Naive thymus-derived CD4-positive, alpha-beta T cell (primary cell): ENCODE measurements at regions of chr2 and their contacts with region 1.

Region 1: GRCh38 chr2:96638144-96639121 is at the start of gene KANSL3:
- DNase-seq: peak; percentile 81 to 96 (median 88)
- ATAC-seq: peak; percentile 93
- H3K4me3 ChIP-seq: peak within 1 kb of the TSS; percentile 97
- H3K4me3 Mint-ChIP-seq: peak within 1 kb of the TSS; percentile 89 to 96 (median 93)
- H3K27ac ChIP-seq: peak within 1 kb of the TSS; percentile 90
- H3K27ac Mint-ChIP-seq: peak within 1 kb of the TSS; percentile 87 to 95 (median 92)
- H3K4me1 ChIP-seq: peaks cover 18% of the 10 kb centered on the region in 2 donors
- H3K4me1 Mint-ChIP-seq: peaks cover 28 to 46% (median 39%) of the 10 kb centered on the region in 7 donors
- H3K27me3 ChIP-seq: no peaks in the 10 kb centered on the region
- H3K27me3 Mint-ChIP-seq: peaks cover 0 to 10% (median 0%) of the 10 kb centered on the region in 5 donors
- total RNA-seq, gene KANSL3: 54.0 to 65.0 (median 55.9) TPM

Region 2: GRCh38 chr2:96145036-96145847 is 493.2 kb before region 1 on chr2 and contains the start of gene DUSP2:
- CTCF ChIA-PET with region 1: no interaction called
- POLR2A ChIA-PET with region 1: no interaction called
- intact Hi-C with region 1: loop called in 1 of 2 experiments (anchors 5 kb)
- DNase-seq: peak; percentile 79 to 97 (median 83)
- ATAC-seq: peak; percentile 61
- H3K4me3 ChIP-seq: peak within 1 kb of the TSS; percentile 69
- H3K4me3 Mint-ChIP-seq: peak within 1 kb of the TSS; percentile 90 to 98 (median 95)
- H3K27ac ChIP-seq: peak within 1 kb of the TSS; percentile 99
- H3K27ac Mint-ChIP-seq: peak within 1 kb of the TSS; percentile 96 to 100 (median 99)
- H3K4me1 ChIP-seq: peaks cover 50 to 52% of the 10 kb centered on the region in 2 donors
- H3K4me1 Mint-ChIP-seq: peaks cover 35 to 69% (median 62%) of the 10 kb centered on the region in 7 donors
- H3K27me3 ChIP-seq: no peaks in the 10 kb centered on the region
- H3K27me3 Mint-ChIP-seq: no peaks in the 10 kb centered on the region
- total RNA-seq, gene DUSP2: 22.1 to 255 (median 50.3) TPM

Region 3: DNA sequence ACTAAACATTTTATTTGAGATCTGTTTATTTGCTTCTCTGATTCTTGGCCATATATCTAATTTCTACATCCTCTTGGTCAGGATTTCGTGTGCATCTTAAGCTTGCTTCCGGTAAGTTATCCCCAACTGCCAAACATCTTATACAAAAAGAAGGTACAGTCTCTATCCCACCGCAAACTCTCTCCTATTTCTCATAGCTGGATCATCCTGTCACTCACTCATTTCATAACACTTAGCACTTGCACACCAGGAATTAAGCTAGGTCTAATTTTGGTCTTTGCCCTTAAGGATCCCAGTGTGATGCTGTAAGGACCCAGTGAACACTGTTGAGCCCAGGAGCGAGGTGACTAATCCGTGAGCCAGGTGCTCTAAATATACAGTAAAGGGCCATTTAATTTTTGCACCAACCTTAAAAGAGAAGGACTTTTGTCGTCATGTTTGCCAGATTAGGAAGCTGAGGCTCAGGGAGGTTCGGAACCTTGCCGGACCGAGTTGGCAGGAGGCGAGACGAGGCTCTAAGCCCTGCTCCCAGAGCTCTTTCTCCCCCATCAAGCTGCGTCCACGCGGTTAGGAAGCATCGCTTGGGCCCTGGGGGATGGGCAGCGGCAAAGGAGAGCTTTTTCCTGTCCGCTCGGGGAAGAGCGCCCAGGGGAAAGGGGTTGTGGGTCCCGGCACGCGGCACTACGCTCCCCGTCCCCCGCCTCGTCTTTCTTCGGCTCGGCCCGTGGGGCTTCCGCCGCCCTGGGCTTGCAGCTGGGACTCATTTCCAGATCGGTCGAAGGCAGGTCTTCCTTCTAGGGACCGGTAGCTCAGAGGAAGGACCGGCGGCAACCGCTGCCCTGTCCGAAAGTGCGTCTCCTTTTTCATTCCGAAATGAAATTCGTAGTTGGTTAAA is 317.5 kb before region 1 on chr2:
- CTCF ChIA-PET with region 1: no interaction called
- POLR2A ChIA-PET with region 1: no interaction called
- intact Hi-C with region 1: loop called in 1 of 2 experiments (anchors 5 kb)
- DNase-seq: peak in 3 of 9 donors; percentile 13 to 62 (median 19)
- ATAC-seq: peak; percentile 28
- H3K4me3 ChIP-seq: peak overlapping the region; percentile 82
- H3K4me3 Mint-ChIP-seq: peak overlapping the region; percentile 86 to 95 (median 91)
- H3K27ac ChIP-seq: peak overlapping the region; percentile 53
- H3K27ac Mint-ChIP-seq: peak overlapping the region in 7 of 9 donors; percentile 6 to 89 (median 62)
- H3K4me1 ChIP-seq: peaks cover 21 to 42% of the 10 kb centered on the region in 2 donors
- H3K4me1 Mint-ChIP-seq: peaks cover 7 to 67% (median 33%) of the 10 kb centered on the region in 7 donors
- H3K27me3 ChIP-seq: no peaks in the 10 kb centered on the region
- H3K27me3 Mint-ChIP-seq: peaks cover 0 to 7% (median 0%) of the 10 kb centered on the region in 5 donors

Region 4: DNA sequence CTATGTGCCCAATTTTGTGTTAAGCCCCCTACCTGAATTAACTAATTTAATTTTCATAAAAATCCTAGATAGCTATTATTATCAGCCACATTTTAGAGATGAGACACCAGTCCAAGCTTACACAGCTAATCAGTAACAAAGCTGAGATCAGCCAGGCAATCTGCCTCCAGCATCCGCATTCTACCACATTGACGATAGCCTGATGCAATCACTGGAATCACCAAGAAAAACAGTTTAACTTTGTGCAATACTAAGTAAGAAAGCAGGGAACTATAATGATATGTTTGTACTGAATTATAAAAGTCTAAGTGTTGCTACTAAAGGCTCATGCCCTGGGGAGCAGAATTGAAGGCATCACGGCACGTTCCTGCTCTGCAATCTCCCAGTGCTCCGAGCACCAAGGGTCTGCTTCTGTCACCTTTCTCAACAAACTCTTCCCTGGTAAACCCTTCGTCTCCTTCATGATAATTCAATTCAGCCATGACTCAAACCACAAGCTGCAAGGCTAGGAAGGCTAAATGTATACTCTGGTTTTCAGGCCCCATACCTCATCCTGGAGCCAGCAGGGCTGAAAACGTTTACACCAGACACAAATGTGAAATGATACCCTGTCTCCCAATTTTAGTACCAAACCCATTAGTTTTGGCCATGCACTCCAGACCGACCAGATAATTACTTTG is 19.7 kb before region 1 on chr2:
- CTCF ChIA-PET with region 1: interaction called, 3 read pairs
- POLR2A ChIA-PET with region 1: interaction called, 7 read pairs
- intact Hi-C with region 1: loop called in 1 of 2 experiments (anchors 1 kb)
- DNase-seq: no peak
- ATAC-seq: peak; percentile 57
- H3K4me3 ChIP-seq: no peak overlapping the region
- H3K4me3 Mint-ChIP-seq: no peak overlapping the region
- H3K27ac ChIP-seq: no peak overlapping the region
- H3K27ac Mint-ChIP-seq: peak overlapping the region in 2 of 9 donors; percentile 3 to 63
- H3K4me1 ChIP-seq: peaks cover 0 to 6% of the 10 kb centered on the region in 2 donors
- H3K4me1 Mint-ChIP-seq: peaks cover 18 to 43% (median 30%) of the 10 kb centered on the region in 7 donors
- H3K27me3 ChIP-seq: no peaks in the 10 kb centered on the region
- H3K27me3 Mint-ChIP-seq: no peaks in the 10 kb centered on the region

Region 5: GRCh38 chr2:96816128-96816835 is 177.8 kb after region 1 on chr2 and contains the start of gene CNNM3:
- CTCF ChIA-PET with region 1: no interaction called
- POLR2A ChIA-PET with region 1: no interaction called
- intact Hi-C with region 1: loop called (anchors 1 to 5 kb)
- DNase-seq: peak; percentile 89 to 99 (median 93)
- ATAC-seq: peak; percentile 96
- H3K4me3 ChIP-seq: peak within 1 kb of the TSS; percentile 74
- H3K4me3 Mint-ChIP-seq: peak within 1 kb of the TSS; percentile 86 to 96 (median 92)
- H3K27ac ChIP-seq: peak within 1 kb of the TSS; percentile 79
- H3K27ac Mint-ChIP-seq: peak within 1 kb of the TSS; percentile 75 to 96 (median 86)
- H3K4me1 ChIP-seq: peaks cover 37 to 43% of the 10 kb centered on the region in 2 donors
- H3K4me1 Mint-ChIP-seq: peaks cover 36 to 62% (median 58%) of the 10 kb centered on the region in 7 donors
- H3K27me3 ChIP-seq: no peaks in the 10 kb centered on the region
- H3K27me3 Mint-ChIP-seq: no peaks in the 10 kb centered on the region
- total RNA-seq, gene CNNM3: 32.1 to 51.5 (median 44.6) TPM

Region 6: GRCh38 chr2:97663965-97664635 is 1025.7 kb after region 1 on chr2 and contains the start of gene ACTR1B:
- CTCF ChIA-PET with region 1: no interaction called
- POLR2A ChIA-PET with region 1: no interaction called
- intact Hi-C with region 1: loop called in 1 of 2 experiments (anchors 5 kb)
- DNase-seq: peak; percentile 95 to 99 (median 98)
- ATAC-seq: peak; percentile 92
- H3K4me3 ChIP-seq: peak within 1 kb of the TSS; percentile 89
- H3K4me3 Mint-ChIP-seq: peak within 1 kb of the TSS; percentile 93 to 99 (median 96)
- H3K27ac ChIP-seq: peak within 1 kb of the TSS; percentile 98
- H3K27ac Mint-ChIP-seq: peak within 1 kb of the TSS; percentile 96 to 99 (median 98)
- H3K4me1 ChIP-seq: peaks cover 16 to 25% of the 10 kb centered on the region in 2 donors
- H3K4me1 Mint-ChIP-seq: peaks cover 15 to 48% (median 36%) of the 10 kb centered on the region in 7 donors
- H3K27me3 ChIP-seq: no peaks in the 10 kb centered on the region
- H3K27me3 Mint-ChIP-seq: no peaks in the 10 kb centered on the region
- total RNA-seq, gene ACTR1B: 75.9 to 95.5 (median 89.5) TPM